ENCODE measurements at regions of chr1 and their contacts with region 1.

Region 1: DNA sequence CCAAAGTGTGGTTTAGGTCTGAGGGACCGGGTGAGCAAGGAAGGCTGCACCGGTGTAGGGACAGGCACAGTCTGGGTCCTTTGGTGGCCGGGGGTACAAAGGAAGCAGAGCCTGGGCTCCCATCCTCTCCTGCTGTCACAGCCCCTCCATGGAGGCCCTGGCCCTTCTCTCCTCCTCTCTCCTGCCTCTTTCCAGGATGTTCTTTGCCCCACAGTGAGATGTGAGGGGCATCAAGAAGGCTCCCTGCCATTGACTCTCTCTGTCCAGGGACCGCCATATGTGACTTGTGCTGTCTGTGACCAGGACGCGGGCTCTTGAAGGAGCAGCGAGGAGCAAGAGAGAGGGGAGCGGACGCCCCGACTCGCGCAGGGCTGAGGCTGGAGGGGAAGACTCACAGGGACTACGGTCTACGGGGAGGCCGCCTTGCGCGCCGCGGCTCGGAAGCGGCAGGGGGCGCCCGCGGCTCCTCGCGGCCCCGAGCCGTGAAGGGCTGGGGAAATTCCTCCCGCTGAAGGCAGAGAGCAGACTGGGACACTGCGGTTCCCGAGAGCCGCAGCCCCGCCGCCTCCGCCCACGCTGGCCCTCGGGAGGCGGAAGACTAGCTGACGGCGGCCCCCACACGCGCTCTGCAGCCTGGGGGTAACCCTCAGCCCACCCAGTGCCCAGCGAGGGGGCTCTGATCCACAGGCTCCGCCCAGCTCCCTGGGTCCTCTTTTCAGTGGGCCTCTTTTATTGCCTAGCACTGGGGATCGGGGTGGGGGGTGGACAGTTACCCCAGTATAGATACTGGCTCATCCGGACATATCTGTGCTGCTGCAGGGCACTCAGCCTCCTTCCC is 40.8 kb downstream of the MAB21L3 start:
- DNase-seq: peak; percentile 77
- H3K4me3 Mint-ChIP-seq: peak overlapping the region; percentile 65
- H3K27ac Mint-ChIP-seq: peak overlapping the region; percentile 49
- H3K4me1 Mint-ChIP-seq: peaks cover 16% of the 10 kb centered on the region
- H3K27me3 Mint-ChIP-seq: peaks cover 20% of the 10 kb centered on the region

Region 2: DNA sequence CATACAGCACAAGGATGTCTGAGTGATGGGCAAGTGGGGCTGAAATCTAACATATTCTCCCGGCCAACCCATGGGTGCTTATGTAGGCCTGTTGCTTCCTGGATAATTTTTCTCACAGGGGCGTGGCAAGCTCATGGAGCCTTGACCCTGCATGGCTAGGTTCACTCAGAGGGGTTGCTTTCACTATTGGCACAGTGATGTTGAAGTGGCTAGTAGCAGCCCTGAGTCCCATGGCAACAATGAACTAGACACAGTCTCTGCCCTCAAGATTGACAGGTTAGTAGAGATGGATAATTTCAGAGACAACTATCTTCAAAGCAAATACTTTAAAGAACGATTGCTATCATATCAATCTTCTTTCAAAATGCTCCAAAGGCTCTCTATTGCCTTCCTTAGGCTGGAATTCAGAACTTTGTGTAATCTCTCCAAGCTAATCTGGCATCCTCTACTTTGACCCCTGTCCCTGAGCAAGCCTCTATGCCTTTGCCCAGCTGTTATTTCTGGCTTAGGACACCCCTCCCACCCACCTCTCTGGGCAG is 47.2 kb before region 1 on chr1:
- intact Hi-C with region 1: no loop called
- DNase-seq: no peak
- H3K4me3 Mint-ChIP-seq: no peak overlapping the region
- H3K27ac Mint-ChIP-seq: no peak overlapping the region
- H3K4me1 Mint-ChIP-seq: no peaks in the 10 kb centered on the region
- H3K27me3 Mint-ChIP-seq: peaks cover 10% of the 10 kb centered on the region

Region 3: DNA sequence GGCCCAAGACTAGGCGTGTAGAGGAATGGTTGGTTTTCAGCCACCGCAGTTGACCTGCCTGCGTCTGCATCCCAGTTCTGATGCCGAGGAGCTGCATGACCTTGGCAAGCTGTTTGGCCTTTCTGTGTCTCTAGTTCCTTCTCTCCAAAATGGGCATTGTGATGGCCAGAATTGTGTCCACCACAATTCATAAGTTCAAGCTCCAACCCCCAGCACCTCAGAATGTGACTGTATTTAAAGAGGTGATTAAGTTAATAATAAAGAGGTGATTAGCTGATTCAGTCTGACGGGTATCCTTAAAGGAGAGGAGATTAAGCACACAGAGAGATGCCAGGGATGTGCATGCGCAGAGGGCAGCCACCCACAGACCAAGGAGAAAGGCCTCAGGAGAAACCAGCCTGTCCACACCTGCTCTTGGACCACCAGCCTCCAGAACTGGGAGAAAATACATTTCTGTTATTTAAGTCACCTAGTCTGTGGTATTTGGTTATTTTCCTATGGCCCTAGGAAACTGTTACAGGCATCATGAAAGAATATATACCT is 12.3 kb before region 1 on chr1:
- intact Hi-C with region 1: loop called (anchors 1 kb)
- DNase-seq: no peak
- H3K4me3 Mint-ChIP-seq: no peak overlapping the region
- H3K27ac Mint-ChIP-seq: no peak overlapping the region
- H3K4me1 Mint-ChIP-seq: peaks cover 12% of the 10 kb centered on the region
- H3K27me3 Mint-ChIP-seq: peaks cover 6% of the 10 kb centered on the region

Region 4: DNA sequence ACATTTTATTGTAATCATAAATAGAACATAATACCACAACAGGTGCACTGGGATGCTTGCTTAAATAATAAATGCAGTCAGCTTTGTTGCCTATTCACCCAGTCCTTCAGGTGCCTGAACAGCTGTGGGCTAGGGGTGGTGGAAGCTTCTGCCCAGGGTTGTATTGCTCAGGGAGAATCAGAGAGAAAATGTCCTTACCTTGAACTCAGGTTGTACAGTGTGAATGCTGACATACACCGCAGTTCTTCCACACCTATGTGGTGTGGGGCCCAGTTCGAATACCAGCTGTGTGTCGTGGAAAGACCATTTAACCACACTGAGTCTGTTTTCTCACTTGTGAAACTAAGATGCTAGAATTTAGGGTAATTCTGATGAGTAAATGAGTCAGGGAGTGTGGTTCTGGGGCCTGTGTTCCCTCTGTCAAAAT is 105.4 kb after region 1 on chr1:
- intact Hi-C with region 1: loop called (anchors 2 kb)
- DNase-seq: peak; percentile 6
- H3K4me3 Mint-ChIP-seq: peak overlapping the region; percentile 31
- H3K27ac Mint-ChIP-seq: peak overlapping the region; percentile 69
- H3K4me1 Mint-ChIP-seq: peaks cover 31% of the 10 kb centered on the region
- H3K27me3 Mint-ChIP-seq: peaks cover 5% of the 10 kb centered on the region

Region 5: DNA sequence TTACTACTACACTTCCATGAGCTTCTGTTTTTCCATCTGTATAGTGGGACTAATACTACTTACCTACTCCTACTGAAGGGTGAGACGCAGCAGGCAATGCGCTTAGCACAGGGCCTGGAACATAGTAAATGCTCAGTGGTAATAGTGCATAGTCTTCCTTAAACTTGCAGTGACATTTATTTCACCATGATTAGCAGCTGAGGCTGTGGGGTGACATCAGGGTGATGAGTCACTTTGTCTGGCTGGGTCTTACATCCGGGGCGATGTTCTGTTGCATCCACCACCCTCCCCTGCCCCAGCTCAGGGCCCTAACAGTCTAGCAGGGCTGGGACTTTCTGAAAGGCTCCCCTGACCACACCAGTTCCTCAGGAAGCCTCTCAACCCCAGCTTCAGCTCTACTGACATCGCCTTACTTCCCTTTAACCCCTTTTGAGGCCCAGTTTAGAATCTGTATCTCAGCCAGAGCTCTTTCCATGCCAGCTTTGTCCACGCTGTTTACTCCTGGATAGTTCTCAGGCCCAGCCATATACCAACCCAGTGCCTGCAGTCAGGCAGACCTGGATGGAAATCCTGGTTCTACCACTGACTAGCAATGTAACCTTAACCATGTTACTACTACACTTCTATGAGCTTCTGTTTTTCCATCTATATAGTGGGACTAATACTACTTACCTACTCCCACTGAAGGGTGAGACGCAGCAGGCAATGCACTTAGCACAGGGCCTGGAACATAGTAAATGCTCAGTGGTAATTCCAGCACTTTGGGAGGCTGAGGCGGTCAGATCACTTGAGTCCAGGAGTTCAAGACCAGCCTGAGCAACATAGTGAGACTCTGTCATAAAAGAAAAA is 352.6 kb after region 1 on chr1:
- intact Hi-C with region 1: loop called (anchors 5 kb)
- DNase-seq: peak; percentile 86
- H3K4me3 Mint-ChIP-seq: peak overlapping the region; percentile 3
- H3K27ac Mint-ChIP-seq: peak overlapping the region; percentile 88
- H3K4me1 Mint-ChIP-seq: peaks cover 91% of the 10 kb centered on the region
- H3K27me3 Mint-ChIP-seq: no peaks in the 10 kb centered on the region

Measured in activated T-helper 1 cell treated with anti-CD3 and anti-CD28 coated beads, Interleukin-12 subunit alpha, Interleukin-12 subunit beta, Interleukin-2, Interleukin-4 antibody, amounts not matched to agents 30 ng/mL and 10 ng/mL and 1 ng/mL, durations not matched to agents 14 hours and 24 hours and 36 hours (primary cell).